Activated B cell treated with CpG ODN at 0.5 μM for 24 hours (primary cell): ENCODE measurements at regions of chr12 and their contacts with region 1.

Region 1: DNA sequence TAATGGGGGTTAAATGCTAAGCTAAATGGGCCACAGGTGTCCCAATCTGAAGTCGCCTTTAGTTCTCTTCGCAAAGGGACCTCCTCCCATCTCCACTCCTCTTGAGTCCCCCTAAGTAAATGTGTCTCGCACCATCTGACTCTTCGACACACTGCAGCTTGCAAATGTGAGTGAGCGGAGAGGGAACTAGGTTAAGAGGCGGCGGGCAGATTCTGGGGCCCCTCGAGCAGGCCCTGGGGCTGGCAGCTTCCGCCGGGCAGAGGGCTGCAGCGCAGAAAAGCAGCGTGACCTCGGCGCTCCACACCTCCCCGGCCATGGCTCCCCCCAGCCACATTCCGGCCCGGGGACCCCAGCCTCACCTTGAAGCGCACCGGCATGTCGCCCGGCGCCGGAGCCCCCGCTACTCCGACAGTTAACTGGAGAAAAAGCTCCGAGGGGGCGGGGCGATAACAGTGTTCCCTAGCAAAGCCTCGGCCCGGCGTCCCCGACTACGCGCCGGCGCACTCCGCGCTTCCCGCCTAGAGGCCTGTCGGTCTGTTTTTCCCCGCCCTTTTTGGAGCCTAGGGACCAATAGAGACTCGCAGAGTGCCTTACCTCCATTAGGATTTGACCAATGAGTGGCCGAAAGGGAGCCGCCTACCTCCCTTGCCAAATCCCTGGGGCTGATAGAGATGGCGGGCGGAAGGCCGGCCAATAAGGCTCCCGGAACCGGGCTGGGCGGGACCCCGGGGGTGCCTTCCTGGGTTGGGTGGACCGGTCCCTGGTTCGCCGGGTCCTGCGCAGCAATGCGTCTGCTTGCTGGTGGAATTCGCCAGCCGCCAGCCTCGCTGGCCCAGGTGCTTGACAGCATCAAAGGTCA is at the start of gene MDM1:
- DNase-seq: peak; percentile 92
- ATAC-seq: peak; percentile 97
- H3K4me3 Mint-ChIP-seq: peak within 1 kb of the TSS; percentile 89
- H3K27ac Mint-ChIP-seq: peak within 1 kb of the TSS; percentile 87
- H3K4me1 Mint-ChIP-seq: peaks cover 27% of the 10 kb centered on the region
- H3K27me3 Mint-ChIP-seq: no peaks in the 10 kb centered on the region
- CTCF ChIP-seq: no peak
- total RNA-seq, gene MDM1: 24.5 and 25.9 TPM in 2 replicates

Region 2: GRCh38 chr12:68641138-68641537 is 309.0 kb after region 1 on chr12:
- CTCF ChIA-PET with region 1: no interaction called
- POLR2A ChIA-PET with region 1: interaction called, 3 read pairs
- intact Hi-C with region 1: loop called (anchors 1 kb)
- DNase-seq: no peak
- ATAC-seq: peak; percentile 80
- H3K4me3 Mint-ChIP-seq: peak overlapping the region; percentile 57
- H3K27ac Mint-ChIP-seq: peak overlapping the region; percentile 72
- H3K4me1 Mint-ChIP-seq: peaks cover 77% of the 10 kb centered on the region
- H3K27me3 Mint-ChIP-seq: no peaks in the 10 kb centered on the region
- CTCF ChIP-seq: no peak

Region 3: DNA sequence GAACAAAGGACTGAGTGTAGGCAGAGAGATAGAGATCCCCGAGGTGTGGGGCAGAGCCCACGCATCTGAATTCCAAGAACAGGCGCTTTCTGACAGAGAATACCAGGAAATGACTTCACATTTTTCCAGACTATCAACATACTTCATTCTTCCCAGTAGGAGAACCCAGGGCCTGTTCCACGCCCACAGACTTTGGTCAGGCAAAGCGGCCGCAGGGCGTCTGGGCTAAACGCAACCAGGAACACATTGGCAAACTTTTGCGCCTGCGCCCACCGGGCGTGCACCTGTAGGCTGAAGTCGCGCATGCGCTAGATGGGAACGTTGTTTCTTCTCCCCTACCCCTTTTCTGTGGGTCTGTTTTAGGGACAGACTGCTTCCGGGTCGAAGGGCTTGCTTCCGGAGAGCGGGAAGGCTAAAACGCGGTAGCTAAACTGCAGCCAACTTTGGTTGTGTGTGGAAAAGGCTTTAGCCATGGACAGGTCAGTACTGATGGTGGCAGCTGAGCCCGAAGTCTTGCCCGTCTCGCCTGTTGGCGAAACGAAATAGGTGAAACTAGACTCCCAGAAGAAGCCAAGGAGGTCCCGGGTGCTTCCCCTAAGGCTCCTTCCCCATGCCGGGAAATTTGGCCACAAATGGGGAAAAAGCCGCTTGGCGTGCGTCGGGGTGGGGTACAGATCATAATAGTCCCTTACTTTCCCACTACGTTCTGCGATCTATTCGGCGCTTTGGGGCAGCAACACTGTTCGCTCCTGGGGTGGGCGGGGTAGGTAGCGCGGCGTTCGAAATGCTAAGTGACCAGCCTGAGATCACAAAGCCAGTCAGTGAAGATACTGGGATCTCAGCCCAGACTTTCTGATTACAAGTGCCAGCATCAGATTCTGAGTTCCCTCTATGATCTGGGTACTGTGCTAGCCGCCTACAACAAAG is 354.8 kb after region 1 on chr12 and contains the start of gene NUP107:
- CTCF ChIA-PET with region 1: no interaction called
- POLR2A ChIA-PET with region 1: interaction called, 14 read pairs
- intact Hi-C with region 1: loop called (anchors 1 kb)
- DNase-seq: peak; percentile 93
- ATAC-seq: peak; percentile 97
- H3K4me3 Mint-ChIP-seq: peak within 1 kb of the TSS; percentile 98
- H3K27ac Mint-ChIP-seq: peak within 1 kb of the TSS; percentile 97
- H3K4me1 Mint-ChIP-seq: peaks cover 33% of the 10 kb centered on the region
- H3K27me3 Mint-ChIP-seq: no peaks in the 10 kb centered on the region
- CTCF ChIP-seq: no peak
- total RNA-seq, gene NUP107: 75.0 and 90.8 TPM in 2 replicates